Thyroid gland (tissue), 4 donors: ENCODE measurements at regions of chr5 and their contacts with region 1.

Region 1: DNA sequence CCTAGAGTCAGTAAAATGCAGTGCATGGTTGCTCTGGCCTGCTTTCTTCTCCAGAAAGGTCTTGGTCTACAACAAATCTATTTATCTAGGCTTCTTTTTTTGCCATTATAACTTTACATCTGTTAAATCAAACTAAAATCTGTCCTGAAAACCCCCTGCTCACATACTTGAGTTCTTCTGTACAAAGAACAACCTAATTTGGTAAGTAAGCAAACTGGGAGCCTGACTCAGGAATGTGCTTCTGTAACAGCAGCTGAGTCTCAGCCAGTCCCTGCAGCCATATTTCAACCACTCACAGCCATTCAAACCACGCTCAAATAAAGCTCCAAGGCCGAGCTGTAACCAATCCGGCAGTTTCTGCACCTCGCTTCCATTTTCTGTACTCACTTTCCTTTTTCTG is 95.8 kb downstream of the PLPP1 start:
- DNase-seq: peak; percentile 65 to 70
- H3K4me3 ChIP-seq: no peak overlapping the region
- H3K27ac ChIP-seq: peak overlapping the region; percentile 75 to 90 (median 86)
- H3K4me1 ChIP-seq: peaks cover 33 to 43% of the 10 kb centered on the region in 2 donors
- H3K27me3 ChIP-seq: no peaks in the 10 kb centered on the region
- CTCF ChIP-seq: no peak
- POLR2A ChIP-seq: peak in 1 of 2 donors; percentile 60

Region 2: DNA sequence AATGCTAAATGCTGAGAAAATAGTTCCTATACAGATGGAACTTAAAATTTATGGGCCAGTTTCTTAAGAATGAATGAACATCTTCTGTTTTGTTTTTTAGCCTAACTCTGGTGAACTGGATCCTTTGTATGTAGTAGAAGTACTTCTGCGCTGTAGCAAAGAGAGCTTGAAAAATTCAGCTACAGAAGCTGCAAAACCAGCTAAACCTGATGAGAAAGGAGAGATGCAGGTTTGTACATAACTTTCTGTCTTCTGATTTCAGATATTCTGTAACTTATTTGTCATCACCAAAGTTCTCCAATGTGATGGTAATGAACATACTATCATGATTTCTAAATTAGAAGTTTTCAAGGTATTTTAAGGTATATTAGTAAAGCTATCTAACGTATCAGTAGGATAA is 51.1 kb before region 1 on chr5:
- intact Hi-C with region 1: no loop called
- DNase-seq: peak in 1 of 2 donors; percentile 6
- H3K4me3 ChIP-seq: no peak overlapping the region
- H3K27ac ChIP-seq: peak overlapping the region in 1 of 3 donors; percentile 7
- H3K4me1 ChIP-seq: peaks cover 0 to 7% of the 10 kb centered on the region in 2 donors
- H3K27me3 ChIP-seq: no peaks in the 10 kb centered on the region
- CTCF ChIP-seq: no peak
- POLR2A ChIP-seq: no peak

Region 3: DNA sequence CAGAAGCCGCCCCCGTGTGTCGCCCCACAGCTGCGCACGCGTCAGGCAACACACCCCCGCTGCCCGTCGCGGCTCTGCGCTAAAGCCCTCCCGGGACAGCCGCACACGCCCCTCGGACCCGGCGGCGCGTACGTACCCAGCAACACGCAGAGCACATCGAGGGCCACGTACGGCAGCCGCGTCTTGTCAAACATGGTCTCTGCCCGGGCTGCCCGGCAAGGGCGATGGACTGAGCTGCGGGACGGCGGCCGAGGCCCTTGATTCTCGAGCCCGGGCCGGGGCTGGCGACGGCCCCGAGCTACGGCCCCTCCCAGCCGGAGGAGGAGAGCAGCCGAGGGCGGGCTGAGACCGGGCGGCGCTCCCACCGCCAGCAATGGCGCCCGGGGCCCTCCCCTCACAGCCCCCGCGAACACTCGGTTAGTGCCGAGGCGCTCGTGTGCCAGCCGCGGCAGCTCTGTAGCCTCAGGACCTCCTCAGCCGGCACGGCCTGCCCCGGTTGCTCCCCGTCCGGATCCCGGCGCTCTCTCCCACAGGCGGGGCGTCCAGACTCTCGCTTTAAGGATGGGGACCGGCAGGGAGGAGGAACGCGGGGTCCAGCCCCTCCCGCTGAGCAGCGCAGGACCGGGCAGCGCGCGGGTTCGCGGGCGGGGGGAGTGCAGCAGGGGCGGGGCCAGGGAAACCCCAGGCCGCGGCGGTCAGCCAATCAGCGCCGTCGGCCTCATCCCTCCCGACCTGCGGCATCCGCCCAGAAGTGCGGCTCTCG is 95.6 kb after region 1 on chr5 and contains the start of gene PLPP1:
- intact Hi-C with region 1: loop called (anchors 10 kb)
- DNase-seq: peak; percentile 93 to 94
- H3K4me3 ChIP-seq: peak within 1 kb of the TSS; percentile 30 to 91 (median 90)
- H3K27ac ChIP-seq: peak within 1 kb of the TSS; percentile 90 to 97 (median 96)
- H3K4me1 ChIP-seq: peaks cover 5 to 7% of the 10 kb centered on the region in 2 donors
- H3K27me3 ChIP-seq: no peaks in the 10 kb centered on the region
- CTCF ChIP-seq: no peak
- POLR2A ChIP-seq: peak in 1 of 2 donors; percentile 93
- total RNA-seq, gene PLPP1: 172 to 284 (median 248) TPM